Activated CD8-positive, alpha-beta T cell treated with anti-CD3 and anti-CD28 coated beads, Interleukin-2, amount 10 ng/mL, durations not matched to agents 7 days and 5 days (primary cell): ENCODE measurements at regions of chr3 and their contacts with region 1.

Region 1: DNA sequence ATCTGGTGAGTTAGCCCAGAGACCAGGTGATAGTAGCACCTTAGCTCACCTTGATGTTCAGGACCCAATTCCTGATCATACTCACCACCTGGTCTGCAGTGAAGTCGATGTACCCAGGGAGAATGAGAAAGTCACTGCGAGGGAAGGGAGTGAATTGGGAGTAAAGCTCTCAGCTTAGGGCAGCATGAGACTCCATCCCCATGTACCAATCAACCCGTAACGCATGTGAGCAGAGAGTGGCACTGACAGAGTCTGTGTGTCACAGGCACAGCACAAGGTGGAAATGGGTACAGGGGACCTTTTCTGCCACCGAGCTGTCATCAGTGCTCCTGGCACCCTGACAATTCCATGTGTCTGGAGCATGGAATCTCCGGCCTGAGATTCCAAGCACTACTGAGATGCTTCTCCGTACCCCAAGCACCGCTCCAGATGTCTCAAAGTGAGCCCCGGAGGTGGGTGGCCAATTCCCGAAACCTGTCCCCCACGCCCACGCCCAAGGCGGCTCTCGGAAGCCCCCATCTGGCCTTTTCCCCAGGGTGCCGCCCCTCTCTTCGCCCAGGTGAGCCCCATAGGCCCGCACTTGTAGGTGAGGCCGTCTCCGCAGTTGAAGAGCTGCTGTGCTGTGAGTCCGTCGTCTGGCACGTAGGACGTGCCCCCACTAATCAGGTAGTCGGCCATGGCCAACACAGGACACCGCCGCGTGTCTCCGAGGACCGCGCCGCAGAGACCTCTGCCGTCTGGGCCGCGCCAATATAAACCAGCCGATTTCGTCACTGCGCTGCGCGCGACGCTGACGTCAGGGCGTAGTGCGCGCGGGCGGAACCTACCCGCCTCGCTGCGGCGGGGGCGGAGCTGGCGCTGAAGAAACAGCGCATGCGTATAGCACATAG is at the start of gene IMPDH2:
- DNase-seq: peak; percentile 94
- ATAC-seq: peak; percentile 95
- H3K4me3 Mint-ChIP-seq: peak within 1 kb of the TSS; percentile 92
- H3K27ac Mint-ChIP-seq: peak within 1 kb of the TSS; percentile 96
- H3K4me1 Mint-ChIP-seq: peaks cover 53% of the 10 kb centered on the region
- H3K27me3 Mint-ChIP-seq: no peaks in the 10 kb centered on the region
- total RNA-seq, gene IMPDH2: 227 to 229 TPM

Region 2: DNA sequence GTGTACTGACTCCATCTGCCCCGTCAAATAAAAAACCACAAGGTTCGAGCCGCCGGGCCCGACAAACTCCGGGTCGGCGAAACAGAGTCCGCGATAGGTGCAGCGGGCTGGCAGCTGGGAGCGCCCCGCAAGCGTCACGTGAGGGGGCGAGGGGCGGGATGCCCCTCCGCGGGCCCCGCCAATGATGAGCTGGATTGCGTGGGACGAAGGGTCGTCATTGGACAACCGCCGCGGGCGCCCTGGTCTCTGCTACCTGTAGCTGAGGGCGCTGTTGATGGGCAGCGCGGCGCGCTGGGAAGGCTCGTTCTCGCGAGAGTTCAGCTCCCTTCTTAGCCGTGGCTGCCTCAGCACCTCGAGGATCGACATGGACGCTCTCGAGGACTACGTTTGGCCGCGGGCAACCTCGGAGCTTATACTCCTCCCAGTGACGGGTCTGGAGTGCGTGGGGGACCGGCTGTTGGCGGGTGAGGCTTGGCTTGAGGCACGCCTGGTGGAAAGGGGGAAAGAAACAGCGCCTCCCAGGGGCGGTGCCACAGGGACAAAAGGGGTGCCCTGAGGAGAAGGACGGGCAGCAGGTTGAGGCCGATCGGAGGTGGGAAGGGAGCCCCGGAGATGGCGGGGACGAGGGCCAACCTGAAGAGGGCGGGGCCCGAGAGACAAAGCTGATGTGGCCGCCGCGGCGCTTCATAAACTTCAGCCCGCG is 21.7 kb before region 1 on chr3 and contains the start of gene WDR6:
- CTCF ChIA-PET with region 1: interaction called, 5 read pairs
- POLR2A ChIA-PET with region 1: interaction called, 16 read pairs
- DNase-seq: peak; percentile 99
- ATAC-seq: peak; percentile 94
- H3K4me3 Mint-ChIP-seq: peak within 1 kb of the TSS; percentile 100
- H3K27ac Mint-ChIP-seq: peak within 1 kb of the TSS; percentile 100
- H3K4me1 Mint-ChIP-seq: peaks cover 31% of the 10 kb centered on the region
- H3K27me3 Mint-ChIP-seq: no peaks in the 10 kb centered on the region
- total RNA-seq, gene WDR6: 134 to 140 TPM